ENCODE measurements at regions of chr15 and their contacts with region 1.

Region 1: DNA sequence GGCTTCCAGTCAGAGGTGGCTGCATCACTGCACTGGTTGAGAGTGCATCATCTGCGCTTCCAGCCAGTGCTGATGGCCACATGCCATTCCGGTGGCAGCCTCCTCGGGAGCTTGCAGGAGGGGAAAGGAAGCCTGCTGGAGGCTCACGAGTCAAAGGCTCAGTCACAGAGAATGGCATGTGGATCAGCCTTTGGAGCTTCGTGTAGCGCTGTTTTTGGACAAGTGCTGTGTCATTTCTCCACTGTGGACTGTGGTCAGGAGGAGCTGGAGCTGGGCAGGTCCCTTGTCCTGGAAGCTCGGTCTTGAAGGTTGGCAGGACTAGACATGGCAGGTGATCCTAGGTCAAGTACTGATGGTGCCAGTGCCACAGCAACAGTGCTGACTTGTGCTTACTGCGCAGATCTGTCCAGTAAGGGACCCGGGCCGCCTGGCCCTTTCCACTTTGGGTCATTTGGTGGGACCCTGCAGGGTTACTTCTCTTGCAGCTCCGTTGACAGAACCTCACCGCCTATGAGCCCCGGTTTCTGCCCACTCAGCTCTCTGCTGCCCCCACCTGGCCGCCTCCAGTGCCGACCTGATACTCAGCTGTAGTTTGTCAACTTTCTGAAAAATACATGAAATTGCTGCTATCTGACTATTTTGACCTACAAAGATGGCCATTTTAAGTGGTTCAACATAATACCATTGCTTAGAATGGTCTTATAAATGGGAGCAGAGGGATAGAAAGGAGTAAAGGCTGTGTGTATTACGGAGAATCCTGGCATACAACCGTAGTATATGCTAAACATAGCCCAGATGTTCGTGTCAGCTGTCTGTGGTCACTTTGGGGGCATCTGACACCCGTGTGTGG is 27.6 kb upstream of the TRPM1 start:
- DNase-seq: peak; percentile 58
- ATAC-seq: peak; percentile 77
- H3K4me3 ChIP-seq: no peak overlapping the region
- H3K27ac ChIP-seq: no peak overlapping the region
- H3K4me1 ChIP-seq: no peaks in the 10 kb centered on the region
- H3K27me3 ChIP-seq: peaks cover 15% of the 10 kb centered on the region
- CTCF ChIP-seq: peak; percentile 95

Region 2: GRCh38 chr15:30670056-30670455 is 459.1 kb before region 1 on chr15:
- CTCF ChIA-PET with region 1: no interaction called
- POLR2A ChIA-PET with region 1: no interaction called
- intact Hi-C with region 1: loop called (anchors 10 kb)
- DNase-seq: no peak
- ATAC-seq: no peak
- H3K4me3 ChIP-seq: no peak overlapping the region
- H3K27ac ChIP-seq: no peak overlapping the region
- H3K4me1 ChIP-seq: no peaks in the 10 kb centered on the region
- H3K27me3 ChIP-seq: no peaks in the 10 kb centered on the region
- CTCF ChIP-seq: no peak

Region 3: DNA sequence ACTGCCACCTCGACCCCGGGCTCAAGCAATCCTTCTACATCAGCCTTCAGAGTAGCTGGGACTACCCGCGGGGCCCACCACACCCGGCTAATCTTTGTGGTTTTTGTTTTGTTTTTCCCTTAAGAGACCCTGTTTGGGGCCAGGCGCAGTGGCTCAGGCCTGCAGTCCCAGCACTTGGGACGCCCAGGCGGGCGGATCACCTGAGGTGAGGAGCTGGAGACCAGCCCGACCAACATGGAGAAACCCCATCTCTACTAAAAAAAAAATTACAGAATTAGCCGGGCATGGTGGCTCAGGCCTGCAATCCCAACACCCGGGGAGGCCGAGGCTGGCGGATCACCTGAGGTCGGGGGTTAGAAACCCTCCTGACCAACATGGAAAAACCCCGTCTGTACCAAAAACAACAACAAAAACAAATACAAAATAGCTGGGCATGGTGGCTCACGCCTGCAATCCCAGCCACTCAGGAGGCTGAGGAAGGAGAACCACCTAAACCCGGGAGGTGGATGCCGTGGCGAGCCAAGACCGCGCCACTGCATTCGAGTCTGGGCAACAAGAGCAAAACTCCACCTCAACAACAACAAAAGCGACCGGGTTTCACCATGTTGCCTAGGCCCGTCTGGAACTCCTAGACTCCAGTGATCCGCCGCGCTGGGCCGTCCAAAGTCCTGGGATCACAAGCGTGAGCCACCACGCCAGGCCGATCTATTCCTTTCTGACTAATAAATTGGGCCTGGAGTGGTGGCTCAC is 233.5 kb before region 1 on chr15:
- CTCF ChIA-PET with region 1: no interaction called
- POLR2A ChIA-PET with region 1: no interaction called
- intact Hi-C with region 1: loop called (anchors 2 kb)
- DNase-seq: no peak
- ATAC-seq: no peak
- H3K4me3 ChIP-seq: no peak overlapping the region
- H3K27ac ChIP-seq: no peak overlapping the region
- H3K4me1 ChIP-seq: peaks cover 15% of the 10 kb centered on the region
- H3K27me3 ChIP-seq: no peaks in the 10 kb centered on the region
- CTCF ChIP-seq: no peak

Region 4: GRCh38 chr15:31478702-31479231 is 349.6 kb after region 1 on chr15:
- CTCF ChIA-PET with region 1: interaction called, 10 read pairs
- POLR2A ChIA-PET with region 1: no interaction called
- intact Hi-C with region 1: no loop called
- DNase-seq: no peak
- ATAC-seq: no peak
- H3K4me3 ChIP-seq: no peak overlapping the region
- H3K27ac ChIP-seq: no peak overlapping the region
- H3K4me1 ChIP-seq: no peaks in the 10 kb centered on the region
- H3K27me3 ChIP-seq: peaks cover 8% of the 10 kb centered on the region; the same call in 1 of the 2 replicates
- CTCF ChIP-seq: no peak

Measured in PC-3 (cell line).